ENCODE measurements at regions of chr19 and their contacts with region 1.

Region 1: DNA sequence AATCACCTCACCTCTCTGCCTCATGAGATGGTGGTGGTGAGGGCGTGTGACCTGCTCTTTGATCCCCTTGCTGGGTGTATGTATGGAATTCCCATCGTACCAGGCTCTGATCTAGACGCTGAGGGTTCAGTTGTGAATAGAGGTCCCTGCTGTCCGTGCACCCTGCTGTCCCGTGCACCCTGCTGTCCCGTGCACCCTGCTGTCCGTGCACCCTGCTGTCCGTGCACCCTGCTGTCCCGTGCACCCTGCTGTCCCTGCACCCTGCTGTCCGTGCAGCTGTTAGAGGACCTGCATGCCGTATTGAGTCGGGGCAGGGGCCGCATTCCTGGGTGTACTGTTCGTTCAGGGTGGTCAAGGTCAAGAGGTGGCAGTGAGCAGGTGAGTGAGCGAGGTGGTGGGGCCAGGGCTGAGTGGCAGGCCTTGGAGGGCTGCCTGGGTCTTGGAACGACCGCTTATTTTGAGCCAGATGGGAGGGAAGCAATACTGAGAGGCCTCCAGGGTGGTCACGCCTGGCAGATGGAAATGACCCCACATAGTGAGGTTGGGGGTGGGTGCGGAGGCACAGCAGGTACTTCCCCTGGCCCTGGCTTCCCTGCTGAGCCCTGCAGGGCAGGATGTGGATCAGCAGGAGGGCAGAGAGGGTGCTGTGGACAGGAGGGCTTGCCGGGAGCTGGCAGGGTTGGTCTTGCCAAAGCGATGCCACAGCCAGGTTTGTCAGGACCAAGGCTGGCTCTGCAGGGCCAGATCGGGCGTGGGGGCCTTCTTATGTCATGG is 4.6 kb upstream of the EPN1 start:
- DNase-seq: peak in 1 of 2 experiments; percentile 82
- ATAC-seq: peak; percentile 62 to 71
- H3K4me3 ChIP-seq: no peak overlapping the region
- H3K27ac ChIP-seq: peak overlapping the region in 1 of 2 experiments; percentile 42; a peak in 1 of 6 replicates
- H3K4me1 ChIP-seq: peaks cover 51% of the 10 kb centered on the region
- CTCF ChIP-seq: no peak
- EP300 ChIP-seq: no peak
- POLR2A ChIP-seq: no peak
- RAD21 ChIP-seq: no peak

Region 2: GRCh38 chr19:55643348-55644176 is 26.9 kb before region 1 on chr19 and contains the start of gene ZNF581:
- CTCF ChIA-PET with region 1: interaction called, 10 read pairs
- POLR2A ChIA-PET with region 1: interaction called, 4 read pairs
- DNase-seq: peak; percentile 86 to 97
- ATAC-seq: peak; percentile 45 to 65
- H3K4me3 ChIP-seq: peak within 1 kb of the TSS; percentile 63
- H3K27ac ChIP-seq: peak within 1 kb of the TSS; percentile 92 to 97
- H3K4me1 ChIP-seq: peaks cover 38% of the 10 kb centered on the region
- CTCF ChIP-seq: no peak
- EP300 ChIP-seq: no peak
- POLR2A ChIP-seq: peak; percentile 45
- RAD21 ChIP-seq: no peak
- polyA plus RNA-seq, gene ZNF581: 13.9 and 17.1 TPM in 2 replicates

Region 3: GRCh38 chr19:55653758-55654539 is 16.5 kb before region 1 on chr19:
- CTCF ChIA-PET with region 1: interaction called, 97 read pairs
- POLR2A ChIA-PET with region 1: interaction called, 31 read pairs
- DNase-seq: peak; percentile 98 to 100
- ATAC-seq: peak; percentile 71 to 85
- H3K4me3 ChIP-seq: peak overlapping the region; percentile 68
- H3K27ac ChIP-seq: peak overlapping the region; percentile 96 to 98
- H3K4me1 ChIP-seq: peaks cover 34% of the 10 kb centered on the region
- CTCF ChIP-seq: peak; percentile 100
- EP300 ChIP-seq: no peak
- POLR2A ChIP-seq: peak; percentile 86
- RAD21 ChIP-seq: peak; percentile 59 to 65